ENCODE measurements at regions of chr7 and their contacts with region 1.

Region 1: GRCh38 chr7:70040970-70041766 is 442.9 kb downstream of the AUTS2 start:
- DNase-seq: no peak
- H3K4me3 ChIP-seq: no peak overlapping the region
- H3K27ac ChIP-seq: no peak overlapping the region
- H3K4me1 ChIP-seq: no peaks in the 10 kb centered on the region
- H3K27me3 ChIP-seq: no peaks in the 10 kb centered on the region
- CTCF ChIP-seq: peak; percentile 19

Region 2: DNA sequence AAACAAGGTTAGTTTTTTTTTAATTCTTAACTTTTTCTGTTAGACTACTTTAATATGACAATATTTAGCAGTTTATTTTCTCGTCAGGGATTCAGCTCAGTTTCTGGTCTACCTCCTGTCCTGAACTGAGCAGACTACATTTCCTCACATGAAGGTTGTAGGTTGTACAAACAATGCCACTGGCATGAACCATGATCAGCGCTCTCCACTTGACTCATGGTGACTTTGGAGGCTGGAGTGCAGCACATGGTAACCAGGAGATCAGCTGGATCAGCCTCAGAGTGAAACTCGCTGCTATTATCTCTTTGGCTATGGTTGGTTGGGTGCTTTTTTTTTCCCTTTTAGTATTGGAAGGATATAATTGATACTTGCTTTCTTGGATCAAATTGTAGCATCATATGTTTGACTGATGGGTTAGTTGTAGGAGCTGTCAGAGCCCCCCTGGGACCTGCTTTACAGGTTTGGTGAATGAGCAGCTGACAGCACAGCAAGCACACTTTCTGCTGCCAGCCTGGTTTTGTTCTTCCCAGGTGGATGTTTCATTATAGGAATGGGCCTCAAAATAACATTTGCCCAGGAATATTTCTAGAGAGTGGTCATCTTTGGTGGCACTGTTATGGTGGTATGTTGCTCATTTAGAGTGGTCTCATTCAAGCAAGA is 113.5 kb after region 1 on chr7:
- intact Hi-C with region 1: loop called (anchors 10 kb)
- DNase-seq: no peak
- H3K4me3 ChIP-seq: no peak overlapping the region
- H3K27ac ChIP-seq: no peak overlapping the region
- H3K4me1 ChIP-seq: no peaks in the 10 kb centered on the region
- H3K27me3 ChIP-seq: no peaks in the 10 kb centered on the region
- CTCF ChIP-seq: no peak

Region 3: DNA sequence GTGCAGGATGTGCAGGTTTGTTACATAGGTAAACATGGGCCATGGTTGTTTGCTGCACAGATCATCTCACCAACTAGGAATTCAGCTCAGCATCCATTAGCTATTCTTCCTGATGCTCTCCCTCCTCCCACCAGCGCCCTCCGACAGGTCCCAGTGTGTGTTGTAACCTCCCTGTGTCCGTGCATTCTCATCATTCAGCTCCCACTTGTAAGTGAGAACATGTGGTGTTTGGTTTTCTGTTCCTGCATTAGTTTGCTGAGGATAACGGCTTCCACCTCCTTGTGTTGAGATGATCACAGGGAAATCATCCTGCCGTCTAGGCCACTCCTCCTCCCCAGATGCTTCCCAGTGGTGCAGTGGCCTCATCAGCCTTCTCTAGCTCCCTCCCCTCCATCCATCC is 829.2 kb after region 1 on chr7:
- intact Hi-C with region 1: no loop called
- DNase-seq: no peak
- H3K4me3 ChIP-seq: no peak overlapping the region
- H3K27ac ChIP-seq: no peak overlapping the region
- H3K4me1 ChIP-seq: no peaks in the 10 kb centered on the region
- H3K27me3 ChIP-seq: no peaks in the 10 kb centered on the region
- CTCF ChIP-seq: no peak